CD4-positive, alpha-beta T cell (primary cell): ENCODE measurements at regions of chr13 and their contacts with region 1.

Region 1: GRCh38 chr13:40494513-40494912 is 171.9 kb downstream of the FOXO1 start:
- DNase-seq: peak in 4 of 14 experiments; percentile 48 to 68 (median 64)
- ATAC-seq: peak; percentile 55
- H3K4me3 ChIP-seq: peak overlapping the region; percentile 28
- H3K4me3 Mint-ChIP-seq: peak overlapping the region; percentile 86
- H3K27ac ChIP-seq: peak overlapping the region; percentile 50 to 55
- H3K27ac Mint-ChIP-seq: peak overlapping the region; percentile 94
- H3K4me1 ChIP-seq: peaks cover 67% of the 10 kb centered on the region
- H3K4me1 Mint-ChIP-seq: peaks cover 84% of the 10 kb centered on the region
- H3K27me3 ChIP-seq: no peaks in the 10 kb centered on the region
- H3K27me3 Mint-ChIP-seq: no peaks in the 10 kb centered on the region
- CTCF ChIP-seq: no peak

Region 2: GRCh38 chr13:40206241-40207000 is 288.1 kb before region 1 on chr13:
- CTCF ChIA-PET with region 1: no interaction called
- POLR2A ChIA-PET with region 1: interaction called, 10 read pairs
- intact Hi-C with region 1: no loop called
- DNase-seq: peak in 12 of 14 experiments; percentile 35 to 80 (median 54)
- ATAC-seq: peak; percentile 92
- H3K4me3 ChIP-seq: peak overlapping the region; percentile 10
- H3K4me3 Mint-ChIP-seq: peak overlapping the region; percentile 79
- H3K27ac ChIP-seq: peak overlapping the region; percentile 68 to 77
- H3K27ac Mint-ChIP-seq: peak overlapping the region; percentile 97
- H3K4me1 ChIP-seq: peaks cover 56% of the 10 kb centered on the region
- H3K4me1 Mint-ChIP-seq: peaks cover 80% of the 10 kb centered on the region
- H3K27me3 ChIP-seq: no peaks in the 10 kb centered on the region
- H3K27me3 Mint-ChIP-seq: no peaks in the 10 kb centered on the region
- CTCF ChIP-seq: no peak

Region 3: GRCh38 chr13:40508127-40508526 is 13.6 kb after region 1 on chr13:
- CTCF ChIA-PET with region 1: no interaction called
- POLR2A ChIA-PET with region 1: interaction called, 16 read pairs
- intact Hi-C with region 1: no loop called
- DNase-seq: peak in 3 of 14 experiments; percentile 31 to 63 (median 63)
- ATAC-seq: peak; percentile 64
- H3K4me3 ChIP-seq: no peak overlapping the region
- H3K4me3 Mint-ChIP-seq: peak overlapping the region; percentile 67
- H3K27ac ChIP-seq: no peak overlapping the region
- H3K27ac Mint-ChIP-seq: peak overlapping the region; percentile 86
- H3K4me1 ChIP-seq: peaks cover 27% of the 10 kb centered on the region
- H3K4me1 Mint-ChIP-seq: peaks cover 74% of the 10 kb centered on the region
- H3K27me3 ChIP-seq: no peaks in the 10 kb centered on the region
- H3K27me3 Mint-ChIP-seq: no peaks in the 10 kb centered on the region
- CTCF ChIP-seq: no peak

Region 4: DNA sequence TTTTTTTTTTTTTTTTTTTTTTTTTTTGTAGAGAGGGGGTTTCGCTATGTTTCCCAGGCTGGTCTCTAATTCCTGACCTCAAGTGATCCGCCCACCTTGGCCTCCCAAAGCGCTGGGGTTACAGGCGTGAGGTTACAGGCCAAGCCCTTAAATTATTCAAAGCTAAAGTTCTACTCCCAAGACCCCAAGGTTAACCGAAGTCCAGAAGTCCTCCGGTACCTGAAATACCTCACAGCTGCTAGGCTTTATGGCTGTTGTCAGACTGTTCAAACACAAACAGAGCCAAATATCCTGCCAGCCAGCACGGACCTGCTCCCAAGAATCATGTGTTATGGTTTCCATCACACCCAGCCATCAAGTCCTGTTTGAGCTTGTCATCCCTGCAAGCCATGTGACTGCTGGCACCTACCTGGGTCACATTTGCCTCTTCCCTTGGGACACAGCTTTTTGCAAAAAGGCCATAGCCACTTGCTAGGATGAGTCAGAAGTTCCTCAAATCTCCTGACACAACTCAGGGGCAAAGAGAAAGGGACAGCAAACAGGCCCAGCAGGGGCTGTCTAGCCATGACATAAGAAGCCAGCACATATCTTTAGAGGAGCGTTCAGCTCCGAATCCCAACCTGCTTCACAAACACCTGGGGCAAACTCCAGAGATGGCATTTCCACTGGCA is 42.1 kb after region 1 on chr13:
- CTCF ChIA-PET with region 1: no interaction called
- POLR2A ChIA-PET with region 1: no interaction called
- intact Hi-C with region 1: loop called in 1 of 2 experiments (anchors 5 kb)
- DNase-seq: no peak
- ATAC-seq: no peak
- H3K4me3 ChIP-seq: no peak overlapping the region
- H3K4me3 Mint-ChIP-seq: no peak overlapping the region
- H3K27ac ChIP-seq: no peak overlapping the region
- H3K27ac Mint-ChIP-seq: no peak overlapping the region
- H3K4me1 ChIP-seq: no peaks in the 10 kb centered on the region
- H3K4me1 Mint-ChIP-seq: peaks cover 15% of the 10 kb centered on the region
- H3K27me3 ChIP-seq: no peaks in the 10 kb centered on the region
- H3K27me3 Mint-ChIP-seq: no peaks in the 10 kb centered on the region
- CTCF ChIP-seq: no peak